PC-9 (cell line): ENCODE measurements at regions of chr9 and their contacts with region 1.

Region 1: DNA sequence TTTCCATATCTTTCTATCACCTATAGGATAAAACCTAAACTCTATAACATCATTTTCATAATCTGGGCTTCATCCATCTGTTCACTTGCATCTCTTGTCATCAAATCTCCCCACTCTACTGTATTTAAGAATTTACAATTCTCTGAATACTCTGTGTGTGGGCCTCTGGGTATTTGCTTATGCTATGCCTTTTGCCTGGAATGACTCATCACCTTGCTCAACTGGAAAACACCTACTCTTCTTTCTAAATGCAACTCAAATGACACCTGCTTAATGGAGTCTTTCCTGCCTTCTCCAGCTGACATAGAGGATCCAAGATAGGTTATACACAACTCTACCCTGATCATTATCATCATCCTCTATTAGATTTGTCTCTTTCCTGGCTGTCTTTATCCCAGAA is 421.7 kb downstream of the SPATA31D1 start:
- DNase-seq: no peak
- H3K4me3 ChIP-seq: no peak overlapping the region
- H3K27ac ChIP-seq: no peak overlapping the region
- H3K4me1 ChIP-seq: 0 out of 2 replicates have a peak, but pooled peaks cover 6% of the 10 kb centered on the region
- H3K27me3 ChIP-seq: no peaks in the 10 kb centered on the region
- CTCF ChIP-seq: no peak

Region 2: GRCh38 chr9:82490019-82490499 is 79.8 kb after region 1 on chr9:
- CTCF ChIA-PET with region 1: no interaction called
- POLR2A ChIA-PET with region 1: no interaction called
- intact Hi-C with region 1: loop called (anchors 5 kb)
- DNase-seq: peak in 1 of 2 experiments; percentile 4
- H3K4me3 ChIP-seq: no peak overlapping the region
- H3K27ac ChIP-seq: no peak overlapping the region
- H3K4me1 ChIP-seq: no peaks in the 10 kb centered on the region
- H3K27me3 ChIP-seq: no peaks in the 10 kb centered on the region
- CTCF ChIP-seq: no peak